Activated B cell treated with CpG ODN at 0.5 μM for 24 hours (primary cell): ENCODE measurements at regions of chr18 and their contacts with region 1.

Region 1: DNA sequence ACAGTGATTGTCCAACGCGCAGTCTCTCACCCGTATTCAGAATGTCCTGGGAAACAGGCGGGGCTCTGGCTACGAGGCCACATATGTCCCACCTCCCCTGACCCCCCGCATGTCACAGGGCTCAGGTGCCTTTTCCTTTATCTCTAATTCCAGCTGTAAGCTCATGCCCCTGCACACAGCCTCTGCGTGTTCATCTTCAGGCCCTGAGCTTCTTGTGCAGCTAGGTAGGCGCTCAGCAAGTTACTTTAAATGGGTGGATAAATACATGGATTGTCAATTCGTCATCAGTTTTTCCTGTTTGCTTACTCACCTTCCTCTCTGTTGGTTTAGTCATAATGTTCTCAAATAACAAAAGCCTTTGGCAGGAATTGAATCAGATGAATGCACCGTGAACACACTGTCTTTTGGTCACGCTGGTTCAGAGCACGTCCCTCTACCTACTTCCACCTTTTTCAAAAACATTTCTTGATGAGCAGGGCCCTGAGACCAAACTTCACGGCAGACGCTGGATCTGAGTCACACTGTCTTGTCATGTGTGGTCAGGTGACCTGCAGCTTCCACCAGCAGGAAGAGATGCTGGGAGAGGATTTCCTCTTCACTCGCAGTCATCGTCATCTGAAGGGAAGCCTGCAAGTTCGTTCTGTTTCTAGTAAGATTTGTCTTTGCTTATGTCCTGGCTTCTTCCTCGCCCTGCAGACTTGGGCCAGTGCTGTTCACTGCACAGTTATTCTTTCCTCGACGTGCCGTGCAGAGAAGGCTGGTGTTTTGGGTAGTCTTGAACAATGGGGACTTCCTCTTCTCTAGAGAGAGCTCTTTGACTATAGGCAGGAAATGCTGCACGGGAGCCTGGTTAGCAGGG is 138.1 kb downstream of the PTGR3 start:
- DNase-seq: peak; percentile 35
- ATAC-seq: peak; percentile 86
- H3K4me3 Mint-ChIP-seq: peak overlapping the region; percentile 82
- H3K27ac Mint-ChIP-seq: peak overlapping the region; percentile 89
- H3K4me1 Mint-ChIP-seq: peaks cover 32% of the 10 kb centered on the region
- H3K27me3 Mint-ChIP-seq: no peaks in the 10 kb centered on the region
- CTCF ChIP-seq: no peak

Region 2: GRCh38 chr18:74597662-74598349 is 473.0 kb before region 1 on chr18 and contains the start of gene ZNF407:
- CTCF ChIA-PET with region 1: no interaction called
- POLR2A ChIA-PET with region 1: no interaction called
- intact Hi-C with region 1: loop called (anchors 1 kb)
- DNase-seq: peak; percentile 85
- ATAC-seq: peak; percentile 84
- H3K4me3 Mint-ChIP-seq: peak within 1 kb of the TSS; percentile 96
- H3K27ac Mint-ChIP-seq: peak within 1 kb of the TSS; percentile 98
- H3K4me1 Mint-ChIP-seq: peaks cover 49% of the 10 kb centered on the region
- H3K27me3 Mint-ChIP-seq: no peaks in the 10 kb centered on the region
- CTCF ChIP-seq: no peak
- total RNA-seq, gene ZNF407: 24.0 and 26.7 TPM in 2 replicates

Region 3: DNA sequence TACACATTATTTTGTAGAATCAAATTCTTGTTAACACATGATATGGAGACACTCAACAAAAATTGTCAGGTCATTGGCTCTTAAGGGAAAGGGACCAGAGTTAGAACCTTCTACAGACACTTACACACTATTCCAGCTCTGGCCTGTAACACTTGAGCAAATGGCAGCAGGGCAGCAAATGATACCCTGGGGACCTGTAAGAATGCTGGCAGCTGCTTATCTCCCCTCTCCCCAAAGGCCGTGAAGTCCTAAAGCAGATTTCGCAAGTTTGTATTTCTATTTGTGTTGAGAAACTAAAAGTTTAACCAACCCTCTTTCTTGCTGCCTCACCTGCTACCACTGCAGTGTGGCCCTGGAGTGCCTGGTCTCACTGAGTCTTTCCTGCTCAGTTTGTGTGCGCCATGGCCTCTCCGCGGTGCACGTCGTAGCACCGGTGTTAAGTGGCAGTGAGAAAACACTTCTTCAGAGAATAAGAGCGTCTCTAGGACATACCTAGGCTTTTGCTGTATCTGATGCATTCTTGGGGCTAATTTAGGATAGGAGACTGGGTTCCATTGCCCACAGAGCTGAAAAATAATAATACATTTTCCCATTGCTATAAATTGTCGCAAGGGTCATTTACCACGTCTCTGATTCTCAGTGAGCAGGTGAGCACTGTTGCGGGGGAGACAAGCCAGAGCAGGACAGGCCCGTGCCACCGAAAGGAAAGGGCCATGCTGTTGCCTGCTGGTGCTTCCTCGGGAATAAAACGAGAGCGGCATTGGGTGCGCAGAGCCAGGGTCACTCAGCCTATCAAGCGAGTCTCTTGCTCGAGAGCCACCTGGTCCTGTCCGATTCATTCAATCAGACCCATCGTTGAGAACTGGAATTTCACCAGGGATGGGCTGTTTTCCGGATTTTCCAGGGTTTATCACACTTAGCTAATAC is 66.8 kb before region 1 on chr18:
- CTCF ChIA-PET with region 1: no interaction called
- POLR2A ChIA-PET with region 1: no interaction called
- intact Hi-C with region 1: no loop called
- DNase-seq: no peak
- ATAC-seq: no peak
- H3K4me3 Mint-ChIP-seq: no peak overlapping the region
- H3K27ac Mint-ChIP-seq: no peak overlapping the region
- H3K4me1 Mint-ChIP-seq: no peaks in the 10 kb centered on the region
- H3K27me3 Mint-ChIP-seq: no peaks in the 10 kb centered on the region
- CTCF ChIP-seq: no peak

Region 4: DNA sequence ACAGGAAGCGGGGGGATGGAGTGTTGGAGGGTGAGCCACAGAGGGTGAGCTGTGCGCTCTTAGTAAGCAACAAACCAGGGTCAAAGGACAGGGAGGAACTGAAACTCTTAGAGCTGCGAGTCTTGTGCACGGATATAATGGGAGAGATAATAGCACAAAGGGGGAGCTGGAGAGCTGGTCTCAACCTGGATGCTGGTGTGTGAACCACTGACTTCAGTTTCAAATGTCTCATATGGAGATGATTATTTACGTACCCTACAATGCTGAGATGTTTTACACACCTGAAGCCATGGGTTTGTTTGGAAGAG is 102.2 kb after region 1 on chr18:
- CTCF ChIA-PET with region 1: no interaction called
- POLR2A ChIA-PET with region 1: no interaction called
- intact Hi-C with region 1: loop called (anchors 5 kb)
- DNase-seq: no peak
- ATAC-seq: peak; percentile 89
- H3K4me3 Mint-ChIP-seq: no peak overlapping the region
- H3K27ac Mint-ChIP-seq: peak overlapping the region; percentile 2
- H3K4me1 Mint-ChIP-seq: peaks cover 14% of the 10 kb centered on the region
- H3K27me3 Mint-ChIP-seq: peaks cover 5% of the 10 kb centered on the region
- CTCF ChIP-seq: no peak

Region 5: GRCh38 chr18:75507636-75508035 is 436.8 kb after region 1 on chr18:
- CTCF ChIA-PET with region 1: no interaction called
- POLR2A ChIA-PET with region 1: no interaction called
- intact Hi-C with region 1: no loop called
- DNase-seq: no peak
- ATAC-seq: no peak
- H3K4me3 Mint-ChIP-seq: no peak overlapping the region
- H3K27ac Mint-ChIP-seq: no peak overlapping the region
- H3K4me1 Mint-ChIP-seq: no peaks in the 10 kb centered on the region
- H3K27me3 Mint-ChIP-seq: peaks cover 9% of the 10 kb centered on the region
- CTCF ChIP-seq: no peak

Region 6: GRCh38 chr18:76822510-76823160 is 1751.8 kb after region 1 on chr18 and contains the start of gene ZNF236:
- CTCF ChIA-PET with region 1: no interaction called
- POLR2A ChIA-PET with region 1: no interaction called
- intact Hi-C with region 1: loop called (anchors 5 kb)
- DNase-seq: peak; percentile 79
- ATAC-seq: peak; percentile 58
- H3K4me3 Mint-ChIP-seq: peak within 1 kb of the TSS; percentile 95
- H3K27ac Mint-ChIP-seq: peak within 1 kb of the TSS; percentile 97
- H3K4me1 Mint-ChIP-seq: peaks cover 64% of the 10 kb centered on the region
- H3K27me3 Mint-ChIP-seq: no peaks in the 10 kb centered on the region
- CTCF ChIP-seq: no peak
- total RNA-seq, gene ZNF236: 27.4 and 28.2 TPM in 2 replicates